GM18951 (cell line): ENCODE measurements at regions of chr19 and their contacts with region 1.

Region 1: GRCh38 chr19:14073261-14073924 is 807 bp downstream of the MISP3 start:
- POLR2A ChIP-seq: peak; percentile 50

Region 2: GRCh38 chr19:13597640-13598039 is 475.8 kb before region 1 on chr19:
- in situ Hi-C with region 1: loop called (anchors 10 kb)
- POLR2A ChIP-seq: no peak

Region 3: GRCh38 chr19:13833330-13834243 is 239.8 kb before region 1 on chr19:
- in situ Hi-C with region 1: no loop called
- POLR2A ChIP-seq: peak; percentile 60

Region 4: DNA sequence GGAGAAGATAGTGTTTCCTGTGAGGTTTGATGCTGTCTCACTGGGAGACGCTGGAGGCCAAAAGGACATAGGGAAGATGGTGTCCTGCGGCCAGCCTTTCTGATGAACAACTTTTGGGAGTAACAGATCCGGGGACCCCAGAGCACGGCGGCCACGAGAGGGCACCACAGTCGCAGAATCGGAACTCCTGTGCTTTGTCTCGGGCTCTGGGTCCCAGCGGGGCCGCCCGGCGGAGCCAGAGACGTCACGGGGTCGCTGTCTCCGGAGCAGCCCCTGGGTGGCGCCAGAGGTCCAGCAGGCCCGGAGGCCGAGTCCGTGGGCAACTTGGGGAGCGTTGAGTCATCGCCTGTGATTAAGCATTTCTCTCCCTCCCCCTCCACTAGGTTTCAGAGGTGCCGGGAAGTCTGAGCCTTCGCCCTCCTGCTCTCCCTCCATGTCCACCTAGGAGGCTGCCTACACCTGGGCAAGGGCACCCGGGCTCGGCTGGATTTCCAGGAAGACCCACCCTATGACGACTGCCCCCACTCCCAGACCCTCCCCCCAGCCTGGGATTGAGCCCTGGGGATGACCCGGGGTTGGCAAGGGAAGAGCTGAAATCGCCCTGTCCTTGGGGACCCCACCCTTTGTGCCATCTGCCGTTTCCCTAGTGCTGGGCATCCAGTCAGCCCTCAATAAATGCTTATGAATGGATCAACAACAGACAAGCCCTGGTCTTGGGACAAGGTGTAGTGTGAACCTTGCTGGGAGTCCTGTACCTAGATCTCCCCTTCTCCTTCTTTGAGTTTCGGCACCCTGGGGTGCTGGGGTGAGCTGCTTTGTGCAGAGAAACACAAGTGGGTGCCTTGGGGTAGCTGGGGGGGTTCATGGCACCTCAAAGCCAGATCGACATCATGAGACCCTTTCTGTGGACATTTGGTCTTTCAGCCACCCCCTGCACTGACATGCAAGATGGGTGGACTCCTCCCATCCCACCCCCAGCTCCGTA is 193.0 kb before region 1 on chr19:
- in situ Hi-C with region 1: loop called (anchors 5 kb)
- POLR2A ChIP-seq: peak; percentile 41

Region 5: GRCh38 chr19:14006243-14006765 is 67.1 kb before region 1 on chr19 and contains the start of gene RFX1:
- in situ Hi-C with region 1: no loop called
- POLR2A ChIP-seq: no peak

Region 6: GRCh38 chr19:14248578-14249011 is 175.2 kb after region 1 on chr19:
- in situ Hi-C with region 1: no loop called
- POLR2A ChIP-seq: no peak